Psoas muscle (tissue), 8 donors: ENCODE measurements at regions of chr11 and their contacts with region 1.

Region 1: DNA sequence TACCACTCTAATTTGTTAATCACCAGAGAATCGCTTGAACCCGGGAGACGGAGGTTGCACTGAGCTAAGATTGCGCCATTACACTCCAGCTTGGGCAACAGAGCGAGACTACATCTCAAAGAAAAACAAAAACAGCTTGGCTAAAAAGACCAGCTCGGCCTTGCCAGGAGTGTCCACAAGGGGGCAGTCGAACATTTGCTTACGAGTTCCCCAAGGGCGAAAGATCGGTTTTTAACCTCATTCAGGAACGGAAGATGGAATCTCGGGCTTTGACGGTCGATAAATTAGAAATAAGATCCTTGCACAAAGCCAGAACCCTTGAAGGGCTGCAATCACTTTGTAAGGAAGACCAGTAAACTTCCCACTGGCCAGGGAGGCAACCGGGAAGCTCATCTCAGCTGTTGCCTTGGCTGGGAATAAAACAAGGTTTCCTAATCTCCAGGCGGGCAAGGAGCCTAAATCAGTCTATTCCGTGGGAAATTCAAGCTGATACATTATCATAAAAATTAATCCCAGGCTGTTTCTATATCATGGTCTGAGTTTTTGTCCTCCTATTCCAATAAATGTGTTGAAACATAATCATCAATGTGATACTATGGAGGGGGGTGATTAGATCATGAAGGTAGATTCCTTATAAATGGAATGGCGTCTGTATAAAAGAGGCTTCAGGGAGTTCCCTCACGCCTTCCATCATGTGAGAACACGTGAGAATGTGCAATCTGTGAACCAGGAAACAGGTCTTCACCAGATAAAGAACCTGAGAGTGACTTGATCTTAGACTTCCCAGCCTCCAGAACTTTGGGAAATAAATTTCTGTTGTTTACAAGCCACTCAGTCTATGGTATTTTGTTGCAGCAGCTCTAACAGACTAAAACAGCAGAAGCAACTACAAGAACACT is 14.9 kb upstream of the SLC29A2 start:
- DNase-seq: peak; percentile 87 to 92
- ATAC-seq: peak; percentile 74 to 87 (median 80)
- H3K4me3 ChIP-seq: peak overlapping the region; percentile 42
- H3K27ac ChIP-seq: peak overlapping the region; percentile 54
- H3K4me1 ChIP-seq: peaks cover 12% of the 10 kb centered on the region
- H3K27me3 ChIP-seq: no peaks in the 10 kb centered on the region
- CTCF ChIP-seq: peak; percentile 91

Region 2: GRCh38 chr11:66311965-66312548 is 74.4 kb before region 1 on chr11:
- intact Hi-C with region 1: loop called (anchors 1 to 5 kb)
- DNase-seq: peak; percentile 90 to 94
- ATAC-seq: peak; percentile 83 to 90 (median 86)
- H3K4me3 ChIP-seq: peak overlapping the region; percentile 69
- H3K27ac ChIP-seq: peak overlapping the region; percentile 75
- H3K4me1 ChIP-seq: no peaks in the 10 kb centered on the region
- H3K27me3 ChIP-seq: peaks cover 0 to 18% (median 6%) of the 10 kb centered on the region in 3 donors
- CTCF ChIP-seq: peak; percentile 90

Region 3: DNA sequence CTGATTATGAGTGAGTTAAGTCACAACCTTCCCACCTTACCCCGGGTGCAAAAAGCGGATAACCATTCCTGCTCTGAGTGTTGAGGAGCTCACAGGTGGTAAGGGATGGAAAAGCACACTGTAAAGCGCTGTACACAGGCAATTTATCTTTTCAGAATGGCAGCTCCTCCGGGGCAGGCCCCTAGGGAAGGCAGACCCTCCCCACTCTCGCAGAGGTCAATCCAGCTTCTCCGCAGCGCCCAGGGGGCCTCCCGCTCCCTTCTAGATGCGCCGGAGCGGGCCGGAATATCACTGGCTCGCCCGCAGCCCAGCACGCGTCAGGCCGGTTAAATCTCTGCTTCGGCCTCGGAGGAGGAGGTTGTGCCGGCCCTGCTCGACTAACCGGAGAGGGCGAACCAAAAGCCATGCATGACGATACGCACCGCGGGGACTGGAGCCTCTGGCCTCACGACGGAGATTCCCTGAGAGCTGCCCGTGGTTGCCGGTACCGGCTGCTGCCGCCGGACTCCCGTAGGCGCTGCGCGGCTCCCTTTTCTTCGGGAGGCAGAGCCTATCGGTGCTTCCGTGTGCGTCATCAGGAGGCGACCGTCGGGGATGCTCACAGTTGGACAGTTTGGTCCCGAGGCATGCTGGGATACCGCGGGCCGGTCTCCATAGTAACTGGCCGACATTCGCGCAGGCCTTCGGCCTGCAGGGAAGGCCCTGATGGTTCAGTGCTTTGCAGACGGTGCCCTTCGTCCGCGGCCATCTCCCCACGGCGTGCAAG is 41.7 kb before region 1 on chr11 and contains the start of gene BRMS1:
- intact Hi-C with region 1: loop called in 1 of 2 experiments (anchors 5 kb)
- DNase-seq: peak; percentile 99
- ATAC-seq: peak; percentile 84 to 88 (median 87)
- H3K4me3 ChIP-seq: peak within 1 kb of the TSS; percentile 94
- H3K27ac ChIP-seq: peak within 1 kb of the TSS; percentile 87
- H3K4me1 ChIP-seq: peaks cover 27% of the 10 kb centered on the region
- H3K27me3 ChIP-seq: no peaks in the 10 kb centered on the region
- CTCF ChIP-seq: peak; percentile 28
- total RNA-seq, gene BRMS1: 12.6 to 33.8 (median 19.9) TPM

Region 4: DNA sequence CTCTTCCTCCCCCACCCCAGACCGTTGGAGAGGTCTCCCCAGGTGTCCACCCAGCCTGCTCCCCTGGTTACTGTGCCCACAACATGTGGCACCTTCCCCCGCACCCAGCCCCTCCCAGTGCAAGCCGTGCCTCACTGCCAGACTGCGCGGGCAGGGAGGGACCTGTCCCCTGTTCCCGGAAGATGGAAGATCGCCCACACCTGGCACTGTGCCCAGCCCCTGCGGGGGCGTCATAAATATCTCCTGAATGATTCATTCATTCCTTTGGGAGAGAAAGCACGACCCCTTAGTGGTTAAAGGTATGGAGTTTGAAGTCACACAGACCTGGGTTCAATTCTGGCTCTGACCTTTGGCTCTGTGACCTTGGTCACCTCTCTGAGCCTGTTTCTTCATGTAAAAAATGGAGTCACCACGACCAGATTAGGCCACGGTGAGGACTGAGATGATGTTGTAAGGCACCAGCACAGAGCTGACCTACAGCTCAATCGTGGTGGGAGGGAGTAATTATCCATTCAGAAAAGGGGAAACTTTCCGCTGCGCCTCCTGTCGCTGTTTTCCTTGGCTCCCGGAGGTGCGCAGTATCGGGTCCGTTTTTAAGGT is 636.0 kb after region 1 on chr11:
- intact Hi-C with region 1: no loop called
- DNase-seq: peak in 1 of 2 donors; percentile 44
- ATAC-seq: peak in 3 of 4 donors; percentile 45 to 63 (median 50)
- H3K4me3 ChIP-seq: peak overlapping the region; percentile 65
- H3K27ac ChIP-seq: no peak overlapping the region
- H3K4me1 ChIP-seq: peaks cover 7% of the 10 kb centered on the region
- H3K27me3 ChIP-seq: peaks cover 0 to 11% (median 0%) of the 10 kb centered on the region in 3 donors
- CTCF ChIP-seq: no peak